BJ (cell line): ENCODE measurements at regions of chr7 and their contacts with region 1.

Region 1: GRCh38 chr7:34321000-34321581 is 336.9 kb upstream of the NPSR1 start:
- DNase-seq: peak; percentile 35
- H3K4me3 ChIP-seq: 0 out of 2 replicates have a peak overlapping the region, but pooled peaks have one; percentile 1
- H3K27me3 ChIP-seq: no peaks in the 10 kb centered on the region
- CTCF ChIP-seq: peak; percentile 92

Region 2: DNA sequence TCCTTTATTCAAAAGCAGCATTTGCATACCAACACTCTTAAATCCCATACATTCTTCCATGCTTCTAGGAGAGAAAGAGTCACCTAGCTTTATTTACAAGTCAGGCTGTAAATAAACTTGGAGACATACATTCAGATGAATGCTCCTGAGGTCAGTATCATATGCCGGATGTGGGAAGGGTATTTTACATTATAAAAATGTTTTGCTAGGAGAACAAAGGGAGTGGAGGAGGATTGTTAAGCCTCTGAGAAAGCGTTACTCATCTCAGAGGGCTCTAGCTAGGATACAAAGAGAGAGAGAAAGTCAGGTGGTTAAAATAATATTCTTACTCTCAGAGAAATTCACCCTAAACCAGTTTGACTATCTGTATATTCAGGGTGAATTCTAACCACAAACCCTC is 36.0 kb after region 1 on chr7:
- CTCF ChIA-PET with region 1: interaction called, 12 read pairs
- POLR2A ChIA-PET with region 1: no interaction called
- DNase-seq: no peak
- H3K4me3 ChIP-seq: no peak overlapping the region
- H3K27me3 ChIP-seq: no peaks in the 10 kb centered on the region
- CTCF ChIP-seq: no peak

Region 3: DNA sequence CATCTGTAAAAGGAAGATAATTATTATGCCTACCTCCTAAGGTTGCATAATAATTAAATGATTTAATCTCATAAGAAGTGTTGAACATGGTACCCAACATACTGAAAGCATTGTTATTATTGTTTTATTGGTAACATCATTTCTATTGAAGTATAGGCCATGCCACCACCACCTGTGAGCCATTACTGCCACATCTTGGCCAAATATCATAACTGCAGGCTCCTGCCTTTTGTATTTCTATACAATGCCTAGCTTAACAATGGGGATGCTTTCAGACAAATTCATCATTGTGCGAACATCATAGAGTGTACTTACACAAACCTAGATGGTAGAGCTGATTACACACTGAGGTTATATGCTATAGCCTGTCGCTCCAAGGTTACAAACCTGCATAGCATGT is 275.8 kb after region 1 on chr7:
- CTCF ChIA-PET with region 1: interaction called, 17 read pairs
- POLR2A ChIA-PET with region 1: no interaction called
- DNase-seq: no peak
- H3K4me3 ChIP-seq: no peak overlapping the region
- H3K27me3 ChIP-seq: no peaks in the 10 kb centered on the region
- CTCF ChIP-seq: peak; percentile 37